ENCODE measurements at regions of chr22 and their contacts with region 1.

Region 1: DNA sequence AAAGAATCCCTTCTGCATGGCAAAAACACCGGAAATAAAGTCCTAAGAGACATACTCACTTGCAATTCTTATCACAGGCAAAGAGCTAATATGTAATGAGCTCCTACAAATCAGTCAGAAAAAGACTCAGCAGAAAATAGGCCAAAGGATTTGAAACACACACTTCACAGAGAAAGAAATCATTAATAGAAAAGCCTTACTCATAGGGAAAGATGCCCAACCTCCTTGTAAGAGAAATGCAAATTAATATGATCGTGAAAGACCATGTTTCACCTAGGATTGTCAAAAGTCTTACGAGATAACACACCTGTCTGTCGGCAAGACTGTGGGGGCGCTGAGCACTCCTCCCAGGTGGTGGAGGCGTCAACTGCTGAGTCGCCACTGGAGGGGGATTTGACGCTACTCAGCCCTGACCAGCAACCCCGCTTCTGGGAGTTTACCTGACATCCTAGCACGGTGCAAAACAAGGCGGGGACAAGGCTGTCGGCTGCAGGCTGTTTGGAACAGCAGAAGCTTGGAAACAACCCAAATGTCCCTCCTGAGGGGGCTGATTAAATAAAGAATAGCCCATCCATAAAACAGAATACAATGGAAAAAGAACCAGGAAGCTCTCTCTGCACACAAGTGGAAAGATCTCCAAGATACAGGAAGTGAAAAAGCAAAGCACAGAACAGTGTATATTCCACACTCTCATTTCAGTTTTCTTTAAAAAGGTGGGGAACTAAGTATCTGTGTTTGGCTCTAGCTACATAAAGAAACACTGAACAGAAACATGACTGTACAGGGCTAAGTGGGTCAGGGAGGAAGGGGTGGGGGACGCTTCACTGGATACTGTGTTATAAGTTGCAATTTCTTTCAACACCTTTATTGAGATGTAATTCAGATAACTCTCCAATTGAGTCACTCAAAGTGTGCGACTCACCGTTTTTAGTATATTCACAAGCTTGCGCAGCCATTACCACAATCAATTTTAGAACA is 11.5 kb downstream of the CSNK1E start:
- DNase-seq: peak; percentile 44
- ATAC-seq: peak; percentile 78
- H3K4me3 Mint-ChIP-seq: peak overlapping the region; percentile 70
- H3K27ac Mint-ChIP-seq: peak overlapping the region; percentile 88
- H3K4me1 Mint-ChIP-seq: peaks cover 49% of the 10 kb centered on the region
- H3K27me3 Mint-ChIP-seq: no peaks in the 10 kb centered on the region
- CTCF ChIP-seq: no peak

Region 2: DNA sequence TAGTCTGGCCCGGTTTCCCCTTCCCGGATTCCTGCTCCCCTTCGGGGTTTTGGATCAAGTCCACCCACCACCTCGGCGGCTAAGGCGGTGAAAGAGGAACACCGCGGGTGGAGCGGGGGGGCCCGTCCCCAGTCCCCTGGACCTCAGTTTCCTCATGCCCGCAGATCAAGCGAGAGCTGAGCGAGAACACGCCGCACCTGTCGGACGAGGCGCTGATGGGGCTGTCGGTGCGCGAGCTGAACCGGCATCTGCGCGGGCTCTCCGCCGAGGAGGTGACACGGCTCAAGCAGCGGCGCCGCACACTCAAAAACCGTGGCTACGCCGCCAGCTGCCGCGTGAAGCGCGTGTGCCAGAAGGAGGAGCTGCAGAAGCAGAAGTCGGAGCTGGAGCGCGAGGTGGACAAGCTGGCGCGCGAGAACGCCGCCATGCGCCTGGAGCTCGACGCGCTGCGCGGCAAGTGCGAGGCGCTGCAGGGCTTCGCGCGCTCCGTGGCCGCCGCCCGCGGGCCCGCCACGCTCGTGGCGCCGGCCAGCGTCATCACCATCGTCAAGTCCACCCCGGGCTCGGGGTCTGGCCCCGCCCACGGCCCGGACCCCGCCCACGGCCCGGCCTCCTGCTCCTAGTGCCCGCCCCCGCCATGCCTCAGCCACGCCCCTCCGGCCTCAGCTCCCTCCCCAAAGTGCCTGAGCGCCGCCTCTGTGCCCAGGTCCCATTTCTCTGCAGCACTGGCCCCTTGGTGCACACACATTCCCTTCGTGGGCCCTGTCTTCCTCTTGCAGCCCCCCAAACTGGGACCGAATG is 91.3 kb before region 1 on chr22:
- CTCF ChIA-PET with region 1: no interaction called
- POLR2A ChIA-PET with region 1: no interaction called
- intact Hi-C with region 1: no loop called
- DNase-seq: peak; percentile 68
- ATAC-seq: peak; percentile 89
- H3K4me3 Mint-ChIP-seq: peak overlapping the region; percentile 71
- H3K27ac Mint-ChIP-seq: peak overlapping the region; percentile 18
- H3K4me1 Mint-ChIP-seq: peaks cover 24% of the 10 kb centered on the region
- H3K27me3 Mint-ChIP-seq: no peaks in the 10 kb centered on the region
- CTCF ChIP-seq: no peak

Region 3: GRCh38 chr22:38262051-38262795 is 43.5 kb before region 1 on chr22:
- CTCF ChIA-PET with region 1: no interaction called
- POLR2A ChIA-PET with region 1: interaction called, 7 read pairs
- intact Hi-C with region 1: loop called (anchors 2 kb)
- DNase-seq: peak; percentile 34
- ATAC-seq: peak; percentile 38
- H3K4me3 Mint-ChIP-seq: no peak overlapping the region
- H3K27ac Mint-ChIP-seq: peak overlapping the region; percentile 57
- H3K4me1 Mint-ChIP-seq: peaks cover 44% of the 10 kb centered on the region
- H3K27me3 Mint-ChIP-seq: no peaks in the 10 kb centered on the region
- CTCF ChIP-seq: no peak

Region 4: DNA sequence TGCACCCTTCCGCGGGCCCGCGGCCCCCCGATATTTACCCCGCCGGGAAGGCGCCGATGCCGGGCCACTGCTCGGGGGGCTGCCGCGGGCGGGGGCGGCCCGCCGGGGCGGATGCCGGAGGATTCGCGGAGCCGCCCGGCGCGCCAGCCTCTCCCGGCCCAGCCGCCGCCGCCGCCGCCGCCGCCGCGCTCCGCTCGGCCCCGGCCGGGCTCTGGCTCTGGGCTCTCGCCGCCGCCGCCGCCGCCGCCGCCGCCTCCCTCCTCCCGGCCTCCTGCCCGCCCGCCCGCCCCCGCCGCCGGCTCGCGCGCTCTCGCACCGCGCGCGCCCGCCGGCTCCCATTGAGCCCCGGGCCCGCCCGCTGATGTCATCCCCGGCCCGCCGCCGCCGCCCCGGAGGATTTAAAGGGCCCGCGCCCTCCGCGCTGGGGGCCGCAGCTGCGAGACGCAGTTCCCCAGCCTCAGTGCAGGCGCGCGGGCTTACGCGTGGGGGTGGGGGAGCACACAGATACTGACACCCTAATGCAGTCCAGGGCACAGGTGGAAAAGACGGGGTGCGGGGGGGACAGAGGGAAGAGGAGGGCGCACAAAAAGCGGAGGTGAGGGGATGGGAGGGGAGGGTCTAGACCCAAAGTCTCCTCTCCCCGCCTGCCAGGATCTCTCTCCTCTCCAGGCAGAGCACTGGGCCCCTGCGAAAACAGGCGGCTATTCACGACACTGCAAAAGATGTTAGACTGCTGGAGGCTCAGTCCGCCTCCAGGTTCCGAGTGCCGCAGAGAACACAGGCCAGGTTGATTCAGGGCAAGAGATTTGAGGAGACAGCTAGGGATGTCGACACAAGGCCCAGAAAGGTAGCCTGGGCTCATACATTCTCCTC is 11.6 kb after region 1 on chr22 and contains the start of gene CSNK1E:
- CTCF ChIA-PET with region 1: interaction called, 3 read pairs
- POLR2A ChIA-PET with region 1: interaction called, 32 read pairs
- intact Hi-C with region 1: loop called (anchors 1 kb)
- DNase-seq: peak; percentile 72
- ATAC-seq: peak; percentile 58
- H3K4me3 Mint-ChIP-seq: peak within 1 kb of the TSS; percentile 82
- H3K27ac Mint-ChIP-seq: peak within 1 kb of the TSS; percentile 88
- H3K4me1 Mint-ChIP-seq: peaks cover 50% of the 10 kb centered on the region
- H3K27me3 Mint-ChIP-seq: no peaks in the 10 kb centered on the region
- CTCF ChIP-seq: no peak
- total RNA-seq, gene CSNK1E: 80.6 and 85.2 TPM in 2 replicates